ENCODE measurements at regions of chr1 and their contacts with region 1.

Region 1: DNA sequence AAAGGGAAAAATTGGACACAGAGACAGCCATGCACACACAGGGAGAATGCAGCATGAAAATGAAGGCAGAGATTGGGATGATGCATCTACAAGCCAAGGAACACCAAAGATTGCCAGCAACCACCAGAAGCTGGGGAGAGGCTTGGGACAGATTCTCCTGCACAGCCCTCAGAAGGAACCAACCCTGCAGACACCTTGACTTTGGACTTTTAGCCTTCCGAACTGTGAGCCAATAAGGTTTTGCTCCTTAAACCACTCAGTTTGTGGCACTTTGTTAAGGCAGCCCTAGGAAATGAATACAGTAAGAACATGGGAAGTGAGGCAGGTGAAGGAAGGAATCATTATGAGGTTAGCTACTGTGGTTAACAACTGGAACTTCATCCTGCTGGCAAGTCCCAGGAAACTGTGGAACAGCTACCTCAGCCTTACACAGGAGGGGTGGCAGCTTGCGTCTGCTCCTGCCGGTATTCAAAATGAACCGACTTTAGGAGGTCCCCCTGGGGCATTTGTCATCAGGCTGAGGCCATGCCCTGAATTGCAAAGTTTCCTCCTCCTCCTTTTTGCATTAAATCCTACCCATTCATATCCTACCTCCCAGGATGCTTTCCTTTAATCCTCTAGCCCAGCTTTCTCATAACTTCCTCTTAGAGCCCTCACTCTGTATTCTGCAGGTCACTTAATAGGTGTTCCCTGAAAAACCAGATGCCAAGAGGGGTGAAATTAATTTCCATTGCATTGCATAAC is 15.4 kb downstream of the CD247 start:
- DNase-seq: no peak
- H3K4me3 ChIP-seq: no peak overlapping the region
- H3K27ac ChIP-seq: no peak overlapping the region
- H3K27me3 ChIP-seq: peaks cover 21% of the 10 kb centered on the region
- CTCF ChIP-seq: no peak

Region 2: GRCh38 chr1:167467126-167467710 is 35.7 kb before region 1 on chr1:
- CTCF ChIA-PET with region 1: no interaction called
- POLR2A ChIA-PET with region 1: no interaction called
- DNase-seq: no peak
- H3K4me3 ChIP-seq: no peak overlapping the region
- H3K27ac ChIP-seq: no peak overlapping the region
- H3K27me3 ChIP-seq: peaks cover 19% of the 10 kb centered on the region
- CTCF ChIP-seq: no peak

Region 3: GRCh38 chr1:167635156-167635648 is 132.3 kb after region 1 on chr1:
- CTCF ChIA-PET with region 1: interaction called, 10 read pairs
- POLR2A ChIA-PET with region 1: no interaction called
- DNase-seq: no peak
- H3K4me3 ChIP-seq: no peak overlapping the region
- H3K27ac ChIP-seq: peak overlapping the region; percentile 21
- H3K27me3 ChIP-seq: peaks cover 54% of the 10 kb centered on the region
- CTCF ChIP-seq: no peak